ENCODE measurements at regions of chr3 and their contacts with region 1.

Region 1: DNA sequence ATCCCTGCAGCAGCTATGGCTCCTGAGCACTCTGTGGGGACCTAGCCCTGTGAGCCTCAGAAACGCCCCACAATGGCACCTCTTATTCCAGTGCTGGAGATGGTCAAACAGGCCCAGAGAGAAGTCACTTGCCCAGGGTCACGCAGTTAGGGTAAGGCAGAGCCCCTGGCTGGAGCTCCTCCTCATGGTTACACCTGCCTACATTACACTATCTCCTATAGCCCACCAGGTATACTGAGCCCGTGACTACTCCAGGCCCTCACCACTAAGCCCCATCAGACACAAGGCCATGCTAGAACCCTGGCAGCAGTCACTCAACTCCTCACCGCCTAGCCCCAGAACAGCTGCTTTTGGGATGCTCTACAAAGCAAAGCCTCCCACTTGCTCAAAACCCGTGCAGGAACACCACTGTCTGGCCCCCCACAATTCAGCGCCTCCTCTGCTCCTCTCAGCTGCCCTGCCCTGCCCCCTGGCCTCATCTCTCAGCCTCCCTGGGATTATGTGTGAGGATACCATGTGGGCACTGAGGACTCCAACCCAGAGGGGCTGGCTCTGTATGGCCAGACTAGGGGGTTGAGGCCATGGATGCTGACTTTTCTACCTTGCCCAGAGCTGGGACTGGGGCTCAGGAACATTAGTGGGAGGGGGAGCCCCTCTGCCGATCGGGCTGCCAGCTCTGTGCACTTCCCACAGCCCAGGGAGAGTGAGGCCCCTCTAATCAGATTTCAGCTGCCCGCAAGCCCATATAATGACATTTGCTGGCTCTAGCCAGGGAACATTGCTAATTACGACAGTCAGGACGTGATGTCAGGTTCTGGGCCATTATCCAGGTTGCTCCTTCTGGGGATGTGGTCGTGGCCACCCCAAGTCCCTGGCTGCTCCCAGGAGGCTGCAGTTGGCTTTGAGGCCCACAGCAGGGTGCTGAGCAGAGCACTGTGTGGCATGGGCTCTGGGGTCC is 4.0 kb downstream of the NT5DC2 start:
- DNase-seq: peak; percentile 73
- ATAC-seq: peak; percentile 41

Region 2: GRCh38 chr3:52490939-52491526 is 38.6 kb before region 1 on chr3:
- intact Hi-C with region 1: loop called (anchors 5 kb)
- DNase-seq: peak; percentile 81
- ATAC-seq: peak; percentile 36

Region 3: GRCh38 chr3:52501046-52501445 is 28.6 kb before region 1 on chr3:
- intact Hi-C with region 1: no loop called
- DNase-seq: no peak
- ATAC-seq: no peak

Region 4: DNA sequence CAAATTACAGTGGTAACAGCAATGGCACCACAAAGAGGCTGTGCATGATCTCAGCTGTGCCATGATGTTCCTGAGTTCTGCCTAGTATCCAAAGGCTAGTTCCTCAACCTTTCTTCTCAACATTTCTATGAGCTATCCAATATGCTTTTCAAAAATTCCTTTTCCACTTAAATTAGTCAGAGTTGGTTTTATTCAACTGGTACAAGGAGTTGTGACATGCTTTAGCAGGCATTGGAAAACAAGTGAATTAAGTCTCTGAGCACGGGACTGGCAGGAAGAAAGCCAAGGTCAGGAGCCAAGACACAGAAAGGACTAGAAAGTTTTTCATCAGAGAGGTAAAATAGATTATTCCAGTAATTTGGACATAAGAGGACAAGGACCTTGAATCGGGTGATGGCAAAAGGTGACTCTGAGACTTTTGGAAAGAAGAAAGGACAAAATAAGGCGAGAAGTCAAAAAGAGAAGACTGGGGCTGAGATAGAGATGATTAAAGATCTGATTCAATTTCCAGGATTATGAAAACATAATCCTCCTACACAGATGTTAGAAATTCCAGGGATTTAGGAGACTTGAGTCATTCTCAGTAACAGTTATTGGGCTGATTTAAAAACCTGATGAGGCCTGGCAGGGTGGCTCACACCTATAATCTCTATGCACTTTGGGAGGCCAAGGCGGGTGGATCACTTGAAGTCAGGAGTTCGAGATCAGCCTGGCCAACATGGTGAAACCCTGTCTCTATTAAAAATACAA is 120.0 kb after region 1 on chr3:
- intact Hi-C with region 1: no loop called
- DNase-seq: no peak
- ATAC-seq: no peak

Measured in Right ventricle myocardium inferior (tissue), 1 donor.